HEK293 (cell line): ENCODE measurements at regions of chr17 and their contacts with region 1.

Region 1: DNA sequence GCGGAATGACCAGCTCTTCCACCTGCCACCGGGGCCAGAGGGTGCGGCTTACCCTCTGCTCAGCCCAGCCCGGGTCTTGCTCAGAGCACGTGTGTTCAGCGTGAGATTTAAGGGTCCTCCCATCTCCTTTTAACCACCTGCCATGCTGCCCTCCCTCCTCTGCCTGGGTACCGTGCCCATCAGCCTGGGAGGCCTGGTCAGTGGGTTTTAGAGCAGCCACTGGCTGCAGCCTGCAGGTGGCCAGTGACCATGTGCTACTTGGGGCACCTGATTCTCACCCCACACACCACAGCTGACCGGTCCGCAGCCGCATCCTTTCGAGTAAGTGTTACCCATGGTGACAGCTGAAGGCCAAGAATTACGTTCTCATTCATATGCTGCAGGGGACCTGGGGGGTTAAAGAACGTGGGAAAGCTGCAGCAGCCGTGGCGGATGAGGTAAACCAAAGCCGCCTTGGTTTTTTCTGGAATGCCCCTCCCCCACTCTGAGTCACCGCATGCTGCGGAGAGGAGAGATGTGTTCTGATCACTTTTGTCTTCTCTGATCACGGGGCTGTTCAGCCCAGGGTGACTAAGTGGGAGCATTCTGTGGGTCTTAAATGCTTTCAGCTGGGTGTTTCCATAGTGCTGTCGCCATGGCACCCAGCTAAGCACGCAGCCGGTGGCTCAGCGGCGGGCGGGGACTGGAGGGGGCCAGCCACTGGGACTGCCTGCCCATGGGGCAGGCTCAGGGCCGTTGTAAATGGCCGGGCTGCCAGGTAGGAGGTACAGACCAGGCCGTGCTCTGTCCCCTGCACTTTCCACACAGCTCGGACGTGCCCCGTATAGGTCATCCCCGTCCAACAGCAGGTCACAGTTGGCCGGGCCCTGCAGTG is 59.8 kb downstream of the BAIAP2 start:
- H3K4me3 ChIP-seq: no peak overlapping the region
- H3K27ac ChIP-seq: no peak overlapping the region; the same call in 1 of the 2 replicates
- H3K4me1 ChIP-seq: peaks cover 17% of the 10 kb centered on the region
- CTCF ChIP-seq: no peak

Region 2: GRCh38 chr17:80991645-80992076 is 103.1 kb before region 1 on chr17 and contains the start of gene CHMP6:
- CTCF ChIA-PET with region 1: interaction called, 13 read pairs
- POLR2A ChIA-PET with region 1: no interaction called
- H3K4me3 ChIP-seq: peak within 1 kb of the TSS; percentile 63
- H3K27ac ChIP-seq: peak within 1 kb of the TSS; percentile 63; the same call in 1 of the 2 replicates
- H3K4me1 ChIP-seq: peaks cover 2% of the 10 kb centered on the region; the same call in 1 of the 2 replicates
- CTCF ChIP-seq: no peak; the same call in 1 of the 2 replicates

Region 3: DNA sequence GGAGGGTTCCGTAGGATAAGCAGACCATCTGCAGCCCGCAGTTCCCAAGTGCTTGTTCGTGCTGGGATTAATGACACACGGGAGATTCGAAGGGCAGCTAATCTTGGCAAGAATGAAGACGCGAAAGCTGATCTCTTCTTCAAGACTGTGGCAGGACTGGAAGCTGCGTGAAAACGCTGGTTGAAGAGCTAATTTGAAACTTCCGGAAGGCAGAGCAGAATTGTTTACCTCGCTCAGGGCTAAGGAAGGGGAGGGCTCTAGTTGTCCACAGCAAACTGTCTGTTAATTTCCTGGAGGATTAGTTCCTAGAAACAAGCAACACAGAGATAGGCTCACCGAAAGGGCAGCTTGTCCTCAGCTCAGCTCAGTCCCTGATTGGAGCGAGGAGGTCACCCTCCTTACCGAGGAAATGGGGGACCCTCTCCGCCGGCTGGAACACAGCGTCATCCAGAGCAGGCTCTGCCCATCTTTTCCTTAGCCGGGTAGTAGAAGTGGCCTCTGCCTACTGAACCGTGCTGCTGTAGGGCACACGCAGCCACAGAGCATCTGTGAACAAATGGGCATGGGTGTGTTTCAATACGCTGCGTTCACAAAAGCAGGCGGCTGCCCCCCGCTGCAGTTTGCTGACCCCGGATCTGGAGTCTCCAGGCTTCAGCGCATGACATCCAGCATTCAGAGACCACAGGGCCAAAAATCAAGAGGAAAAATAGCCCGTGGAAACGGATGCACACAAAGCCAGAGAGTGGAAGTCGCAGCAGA is 76.5 kb before region 1 on chr17:
- CTCF ChIA-PET with region 1: interaction called, 109 read pairs
- POLR2A ChIA-PET with region 1: no interaction called
- H3K4me3 ChIP-seq: no peak overlapping the region
- H3K27ac ChIP-seq: no peak overlapping the region
- H3K4me1 ChIP-seq: no peaks in the 10 kb centered on the region
- CTCF ChIP-seq: no peak

Region 4: GRCh38 chr17:81040791-81041337 is 53.9 kb before region 1 on chr17:
- CTCF ChIA-PET with region 1: interaction called, 32 read pairs
- POLR2A ChIA-PET with region 1: interaction called, 20 read pairs
- H3K4me3 ChIP-seq: no peak overlapping the region
- H3K27ac ChIP-seq: no peak overlapping the region
- H3K4me1 ChIP-seq: peaks cover 20% of the 10 kb centered on the region
- CTCF ChIP-seq: peak; percentile 78

Region 5: GRCh38 chr17:81059026-81059425 is 35.7 kb before region 1 on chr17:
- CTCF ChIA-PET with region 1: interaction called, 10 read pairs
- POLR2A ChIA-PET with region 1: interaction called, 5 read pairs
- H3K4me3 ChIP-seq: no peak overlapping the region
- H3K27ac ChIP-seq: no peak overlapping the region
- H3K4me1 ChIP-seq: no peaks in the 10 kb centered on the region; the same call in 1 of the 2 replicates
- CTCF ChIP-seq: no peak